Mammary epithelial cell (primary cell): ENCODE measurements at regions of chr20 and their contacts with region 1.

Region 1: DNA sequence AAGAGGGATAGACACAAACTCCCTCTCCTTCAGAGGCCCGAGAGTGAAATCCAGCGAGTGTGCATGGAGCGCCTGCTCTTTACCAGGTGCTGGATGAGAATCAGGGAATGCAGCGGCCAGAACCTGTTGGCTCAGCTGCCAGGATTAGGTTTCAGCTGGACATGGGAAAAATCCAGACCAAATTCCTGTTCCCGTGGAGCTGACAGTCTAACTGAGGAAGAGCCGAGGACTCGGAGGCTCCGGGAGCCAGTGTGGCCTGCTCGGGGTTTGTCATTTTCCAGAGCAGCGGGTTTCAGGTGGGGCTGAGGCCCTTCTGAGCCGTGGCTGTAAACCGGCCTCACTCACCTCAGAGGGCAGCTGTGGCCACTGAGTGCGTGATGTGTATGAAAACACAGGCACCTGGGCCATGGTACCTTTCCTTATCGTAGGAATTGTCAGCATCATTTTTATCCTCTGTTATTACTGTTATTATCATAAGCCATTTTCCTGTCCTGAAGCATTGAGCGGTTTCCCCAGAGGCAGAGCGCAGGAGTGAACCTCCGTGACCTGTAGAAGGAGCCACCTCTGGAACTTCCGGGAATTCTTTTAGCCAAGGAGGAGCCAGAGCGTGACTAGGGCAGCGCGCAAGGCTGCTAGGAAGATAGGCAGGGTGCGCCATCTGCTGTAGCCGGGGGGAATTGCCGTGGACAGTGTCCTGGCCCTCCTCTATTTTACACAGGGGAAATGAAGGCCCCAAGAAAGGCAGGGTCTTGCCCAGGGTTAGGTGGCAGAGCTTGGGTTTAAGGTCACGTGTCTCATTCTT is 27.3 kb downstream of the PKIG start:
- DNase-seq: peak; percentile 83
- H3K4me3 ChIP-seq: peak overlapping the region in 1 of 3 experiments; percentile 38
- H3K27ac ChIP-seq: peak overlapping the region; percentile 79
- H3K4me1 ChIP-seq: peaks cover 17% of the 10 kb centered on the region
- H3K27me3 ChIP-seq: no peaks in the 10 kb centered on the region
- CTCF ChIP-seq: peak; percentile 99 to 100

Region 2: GRCh38 chr20:44217342-44218092 is 392.2 kb before region 1 on chr20:
- CTCF ChIA-PET with region 1: no interaction called
- dilution Hi-C with region 1: no loop called
- in situ Hi-C with region 1: loop called (anchors 10 to 25 kb)
- intact Hi-C with region 1: loop called (anchors 1 kb)
- DNase-seq: peak; percentile 52
- H3K4me3 ChIP-seq: no peak overlapping the region
- H3K27ac ChIP-seq: no peak overlapping the region
- H3K4me1 ChIP-seq: peaks cover 7% of the 10 kb centered on the region
- H3K27me3 ChIP-seq: no peaks in the 10 kb centered on the region
- CTCF ChIP-seq: peak; percentile 96 to 99

Region 3: GRCh38 chr20:44495802-44496481 is 113.8 kb before region 1 on chr20:
- CTCF ChIA-PET with region 1: no interaction called
- dilution Hi-C with region 1: no loop called
- in situ Hi-C with region 1: no loop called
- intact Hi-C with region 1: loop called (anchors 1 kb)
- DNase-seq: peak; percentile 99
- H3K4me3 ChIP-seq: no peak overlapping the region
- H3K27ac ChIP-seq: peak overlapping the region; percentile 100
- H3K4me1 ChIP-seq: peaks cover 41% of the 10 kb centered on the region
- H3K27me3 ChIP-seq: no peaks in the 10 kb centered on the region
- CTCF ChIP-seq: no peak

Region 4: DNA sequence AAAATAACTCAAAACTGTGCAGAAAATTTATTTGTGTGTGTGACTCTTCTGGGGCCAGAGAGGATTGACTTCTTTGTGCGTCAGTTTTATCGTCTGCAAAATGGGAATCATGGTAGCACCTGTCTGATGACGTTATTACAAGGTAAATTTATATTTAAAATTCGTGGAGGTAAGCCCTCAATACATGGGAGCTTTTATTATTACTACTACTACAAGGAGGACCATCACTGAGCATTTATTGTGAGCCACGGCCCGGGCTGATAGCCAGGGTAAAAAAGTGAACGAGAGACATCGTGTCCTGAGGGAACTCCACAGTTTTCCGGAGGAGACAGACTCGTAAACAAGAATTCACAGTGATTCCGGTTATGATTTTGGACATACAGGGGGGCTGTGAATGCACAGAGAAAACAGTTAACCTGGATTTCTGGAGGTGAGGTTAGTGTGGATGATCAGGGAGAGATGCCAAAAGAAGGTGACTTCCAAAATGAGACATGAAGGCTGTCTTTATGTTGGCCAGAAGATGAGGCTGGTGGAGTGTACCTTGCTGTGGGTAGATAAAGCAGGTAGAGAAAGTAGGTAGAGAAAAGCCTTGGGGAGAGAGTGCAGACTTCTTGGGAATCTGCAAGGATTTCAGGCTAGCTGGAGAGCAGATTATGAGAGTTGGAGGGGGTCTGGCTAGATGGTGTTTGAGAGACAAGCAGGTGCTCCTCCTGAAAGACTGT is 77.3 kb before region 1 on chr20:
- CTCF ChIA-PET with region 1: no interaction called
- dilution Hi-C with region 1: no loop called
- in situ Hi-C with region 1: no loop called
- intact Hi-C with region 1: loop called (anchors 1 kb)
- DNase-seq: no peak
- H3K4me3 ChIP-seq: peak overlapping the region; percentile 60 to 82 (median 69)
- H3K27ac ChIP-seq: peak overlapping the region; percentile 50
- H3K4me1 ChIP-seq: peaks cover 9% of the 10 kb centered on the region
- H3K27me3 ChIP-seq: no peaks in the 10 kb centered on the region
- CTCF ChIP-seq: no peak

Region 5: GRCh38 chr20:44642203-44643153 is 32.8 kb after region 1 on chr20:
- CTCF ChIA-PET with region 1: no interaction called
- dilution Hi-C with region 1: no loop called
- in situ Hi-C with region 1: no loop called
- intact Hi-C with region 1: loop called (anchors 2 kb)
- DNase-seq: peak; percentile 82
- H3K4me3 ChIP-seq: no peak overlapping the region
- H3K27ac ChIP-seq: peak overlapping the region; percentile 58
- H3K4me1 ChIP-seq: peaks cover 36% of the 10 kb centered on the region
- H3K27me3 ChIP-seq: no peaks in the 10 kb centered on the region
- CTCF ChIP-seq: peak in 1 of 2 donors; percentile 35

Region 6: DNA sequence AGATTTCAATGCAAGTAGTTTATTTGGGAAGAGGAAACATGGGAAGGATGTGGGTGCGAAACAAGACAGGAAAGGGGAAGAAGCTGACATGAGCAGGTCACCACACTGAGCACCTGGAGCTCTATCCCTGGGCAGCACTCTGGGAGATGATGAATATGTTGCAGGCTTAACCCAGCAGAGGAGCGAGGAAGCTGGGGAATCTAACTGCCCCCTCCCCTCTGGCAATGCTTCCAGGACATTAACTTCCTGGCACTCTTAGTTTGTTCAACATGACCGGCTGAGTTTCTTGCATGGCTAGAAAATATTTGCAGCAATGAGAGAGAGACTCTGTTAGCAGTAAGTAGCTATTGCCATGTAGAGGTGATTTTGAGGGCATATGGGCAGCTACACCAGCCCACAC is 46.7 kb after region 1 on chr20:
- CTCF ChIA-PET with region 1: no interaction called
- dilution Hi-C with region 1: no loop called
- in situ Hi-C with region 1: no loop called
- intact Hi-C with region 1: no loop called
- DNase-seq: no peak
- H3K4me3 ChIP-seq: no peak overlapping the region
- H3K27ac ChIP-seq: no peak overlapping the region
- H3K4me1 ChIP-seq: peaks cover 7% of the 10 kb centered on the region
- H3K27me3 ChIP-seq: no peaks in the 10 kb centered on the region
- CTCF ChIP-seq: no peak

Region 7: DNA sequence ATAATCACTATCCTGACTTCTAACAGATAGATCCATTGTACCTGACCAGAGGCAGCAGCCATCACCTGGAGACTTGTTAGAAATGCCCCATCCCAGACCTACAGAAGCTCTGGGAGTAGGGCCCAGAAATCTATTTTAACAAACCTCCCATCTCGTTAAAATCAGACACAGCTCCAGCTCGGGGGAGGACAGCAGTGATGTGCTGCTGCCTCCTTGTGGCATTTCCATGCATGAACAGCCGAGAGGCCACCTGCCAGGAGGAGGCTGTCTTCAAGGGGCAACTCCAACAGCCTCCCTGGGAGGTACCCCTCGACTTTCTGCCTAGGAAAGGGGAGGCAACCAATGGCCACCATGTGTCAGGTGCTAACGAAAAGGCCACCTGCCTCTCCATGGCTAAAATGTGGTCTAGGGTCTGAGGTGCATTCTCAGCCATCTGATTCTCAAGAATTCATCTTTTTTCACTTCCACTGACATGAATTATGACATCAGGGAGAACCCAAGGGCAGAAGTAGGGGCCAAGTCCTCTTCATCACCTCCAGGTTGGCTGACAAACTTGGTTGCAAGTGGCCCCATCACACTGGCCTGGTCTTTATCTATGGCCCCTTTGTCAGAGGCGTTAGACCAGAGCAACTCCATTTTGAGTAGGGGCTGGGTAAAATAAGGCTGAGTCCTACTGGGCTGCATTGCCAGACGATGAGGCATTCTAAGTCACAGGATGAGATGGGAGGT is 123.8 kb after region 1 on chr20:
- CTCF ChIA-PET with region 1: no interaction called
- dilution Hi-C with region 1: no loop called
- in situ Hi-C with region 1: no loop called
- intact Hi-C with region 1: loop called (anchors 5 kb)
- DNase-seq: peak; percentile 57
- H3K4me3 ChIP-seq: no peak overlapping the region
- H3K27ac ChIP-seq: no peak overlapping the region
- H3K4me1 ChIP-seq: peaks cover 32% of the 10 kb centered on the region
- H3K27me3 ChIP-seq: no peaks in the 10 kb centered on the region
- CTCF ChIP-seq: peak; percentile 88 to 92